Activated CD4-positive, alpha-beta T cell treated with anti-CD3 and anti-CD28 coated beads, Interleukin-2, amount 10 ng/mL, durations not matched to agents 24 days and 14 days (primary cell): ENCODE measurements at regions of chr1 and their contacts with region 1.

Region 1: GRCh38 chr1:198922638-198923430 is 284.0 kb downstream of the PTPRC start:
- DNase-seq: no peak
- H3K4me3 Mint-ChIP-seq: peak overlapping the region; percentile 84
- H3K27ac Mint-ChIP-seq: peak overlapping the region; percentile 93
- H3K4me1 Mint-ChIP-seq: peaks cover 71% of the 10 kb centered on the region
- H3K27me3 Mint-ChIP-seq: no peaks in the 10 kb centered on the region

Region 2: GRCh38 chr1:198649968-198650338 is 272.9 kb before region 1 on chr1:
- intact Hi-C with region 1: loop called (anchors 5 kb)
- DNase-seq: peak; percentile 80
- H3K4me3 Mint-ChIP-seq: peak overlapping the region; percentile 81
- H3K27ac Mint-ChIP-seq: peak overlapping the region; percentile 88
- H3K4me1 Mint-ChIP-seq: peaks cover 58% of the 10 kb centered on the region
- H3K27me3 Mint-ChIP-seq: no peaks in the 10 kb centered on the region

Region 3: GRCh38 chr1:198867182-198867581 is 55.7 kb before region 1 on chr1:
- intact Hi-C with region 1: no loop called
- DNase-seq: no peak
- H3K4me3 Mint-ChIP-seq: no peak overlapping the region
- H3K27ac Mint-ChIP-seq: no peak overlapping the region
- H3K4me1 Mint-ChIP-seq: peaks cover 8% of the 10 kb centered on the region
- H3K27me3 Mint-ChIP-seq: no peaks in the 10 kb centered on the region

Region 4: GRCh38 chr1:198880818-198881597 is 41.8 kb before region 1 on chr1:
- intact Hi-C with region 1: loop called (anchors 1 kb)
- DNase-seq: no peak
- H3K4me3 Mint-ChIP-seq: peak overlapping the region; percentile 23
- H3K27ac Mint-ChIP-seq: peak overlapping the region; percentile 86
- H3K4me1 Mint-ChIP-seq: peaks cover 34% of the 10 kb centered on the region
- H3K27me3 Mint-ChIP-seq: no peaks in the 10 kb centered on the region

Region 5: GRCh38 chr1:198892065-198892464 is 30.8 kb before region 1 on chr1:
- intact Hi-C with region 1: no loop called
- DNase-seq: no peak
- H3K4me3 Mint-ChIP-seq: no peak overlapping the region
- H3K27ac Mint-ChIP-seq: no peak overlapping the region
- H3K4me1 Mint-ChIP-seq: peaks cover 18% of the 10 kb centered on the region
- H3K27me3 Mint-ChIP-seq: no peaks in the 10 kb centered on the region

Region 6: GRCh38 chr1:198948895-198949659 is 26.2 kb after region 1 on chr1:
- intact Hi-C with region 1: no loop called
- DNase-seq: no peak
- H3K4me3 Mint-ChIP-seq: no peak overlapping the region
- H3K27ac Mint-ChIP-seq: no peak overlapping the region
- H3K4me1 Mint-ChIP-seq: peaks cover 3% of the 10 kb centered on the region
- H3K27me3 Mint-ChIP-seq: no peaks in the 10 kb centered on the region

Region 7: DNA sequence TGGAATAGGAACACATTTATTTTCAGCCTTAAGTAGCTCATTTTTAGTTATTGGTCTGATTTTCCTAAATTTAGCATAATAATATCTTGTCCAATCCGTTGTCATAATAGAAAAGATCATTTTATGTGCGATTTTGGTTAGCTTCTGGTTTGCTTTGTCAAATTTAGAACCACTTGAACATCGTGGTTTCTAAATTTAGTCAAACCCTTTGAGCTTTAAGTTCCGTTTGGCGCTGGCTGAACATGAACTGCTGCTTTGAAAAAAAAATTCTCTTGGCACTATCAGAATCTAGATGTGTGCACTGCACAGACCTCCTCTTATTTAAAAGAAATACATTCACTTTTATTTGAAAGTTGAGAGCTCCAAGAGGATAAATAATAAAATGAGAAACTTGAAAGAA is 86.6 kb after region 1 on chr1:
- intact Hi-C with region 1: no loop called
- DNase-seq: peak; percentile 71
- H3K4me3 Mint-ChIP-seq: peak overlapping the region; percentile 50
- H3K27ac Mint-ChIP-seq: peak overlapping the region; percentile 62
- H3K4me1 Mint-ChIP-seq: peaks cover 43% of the 10 kb centered on the region
- H3K27me3 Mint-ChIP-seq: peaks cover 2% of the 10 kb centered on the region

Region 8: DNA sequence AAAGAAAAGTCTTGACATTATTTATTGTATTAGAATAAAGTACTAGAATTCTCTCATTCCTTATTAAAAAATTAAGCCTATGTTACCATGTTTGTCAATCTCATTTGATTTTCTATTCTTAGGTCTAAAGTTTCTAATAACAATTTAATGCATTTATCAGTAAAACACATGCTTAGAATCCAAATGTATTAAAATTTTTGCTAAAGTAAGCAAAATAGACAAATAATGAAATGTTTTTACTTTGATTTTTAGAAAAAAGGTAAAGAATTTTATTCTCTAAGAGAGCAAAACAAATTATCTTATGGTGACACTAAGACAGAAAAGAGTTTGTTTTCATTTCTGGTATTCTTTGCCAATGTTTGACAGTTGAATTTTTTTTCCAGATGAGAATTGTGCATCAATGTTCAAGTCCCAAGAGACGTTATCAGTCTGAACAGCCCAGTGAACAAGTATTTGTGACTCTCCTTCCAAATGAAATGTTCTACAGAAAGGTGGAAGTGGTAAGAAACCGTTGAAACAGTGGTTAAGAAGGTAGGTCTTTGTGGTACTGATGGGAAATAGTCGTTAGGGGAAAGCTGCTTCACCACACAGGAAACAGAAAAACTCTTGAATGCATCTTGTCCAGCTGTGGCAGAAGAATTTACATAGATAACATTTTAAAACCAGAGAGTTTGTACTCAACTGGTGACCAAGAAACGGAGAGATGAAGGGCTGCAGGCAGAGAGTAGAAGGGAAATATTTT is 118.5 kb after region 1 on chr1:
- intact Hi-C with region 1: loop called (anchors 2 kb)
- DNase-seq: peak; percentile 88
- H3K4me3 Mint-ChIP-seq: peak overlapping the region; percentile 59
- H3K27ac Mint-ChIP-seq: peak overlapping the region; percentile 87
- H3K4me1 Mint-ChIP-seq: peaks cover 37% of the 10 kb centered on the region
- H3K27me3 Mint-ChIP-seq: no peaks in the 10 kb centered on the region

Region 9: DNA sequence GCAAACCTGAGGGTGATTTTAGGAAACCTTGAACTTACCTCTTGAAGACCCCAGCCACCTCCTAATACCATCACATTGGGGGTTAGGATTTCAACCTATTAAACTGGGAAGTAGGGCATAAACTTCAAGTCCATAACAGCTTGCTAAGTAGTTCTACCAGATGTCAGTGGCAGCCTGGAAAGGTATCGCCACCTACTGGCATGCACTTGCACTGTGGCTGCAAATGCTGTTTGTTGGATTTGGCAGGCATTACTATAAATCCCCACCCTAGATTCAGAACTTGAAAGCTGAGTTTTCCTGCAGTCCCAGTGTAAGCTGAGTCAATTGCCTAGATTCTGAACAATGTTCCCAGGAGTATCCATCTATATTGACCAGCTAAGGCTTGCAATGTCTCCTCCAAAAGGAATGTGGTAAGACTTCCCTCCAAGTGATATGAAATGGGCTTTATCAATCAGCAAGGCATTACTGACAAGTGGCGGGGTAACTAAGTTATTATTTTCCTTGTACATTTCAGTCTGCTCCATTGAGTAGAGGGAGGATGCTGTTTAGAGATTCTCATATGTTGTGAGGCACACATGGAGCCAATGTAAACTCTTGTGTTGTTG is 190.5 kb after region 1 on chr1:
- intact Hi-C with region 1: loop called (anchors 5 kb)
- DNase-seq: peak; percentile 89
- H3K4me3 Mint-ChIP-seq: no peak overlapping the region
- H3K27ac Mint-ChIP-seq: no peak overlapping the region
- H3K4me1 Mint-ChIP-seq: peaks cover 11% of the 10 kb centered on the region
- H3K27me3 Mint-ChIP-seq: no peaks in the 10 kb centered on the region

Region 10: GRCh38 chr1:199226163-199226562 is 303.3 kb after region 1 on chr1:
- intact Hi-C with region 1: loop called (anchors 5 kb)
- DNase-seq: peak; percentile 80
- H3K4me3 Mint-ChIP-seq: peak overlapping the region; percentile 47
- H3K27ac Mint-ChIP-seq: peak overlapping the region; percentile 48
- H3K4me1 Mint-ChIP-seq: peaks cover 14% of the 10 kb centered on the region
- H3K27me3 Mint-ChIP-seq: no peaks in the 10 kb centered on the region